ENCODE measurements at regions of chr3 and their contacts with region 1.

Region 1: GRCh38 chr3:20340324-20340928 is 154.4 kb upstream of the SGO1 start:
- DNase-seq: peak; percentile 62
- ATAC-seq: peak; percentile 93
- H3K4me3 ChIP-seq: no peak overlapping the region
- H3K27ac ChIP-seq: no peak overlapping the region
- H3K4me1 ChIP-seq: no peaks in the 10 kb centered on the region
- H3K27me3 ChIP-seq: no peaks in the 10 kb centered on the region
- CTCF ChIP-seq: peak; percentile 85
- EP300 ChIP-seq: no peak
- POLR2A ChIP-seq: no peak
- RAD21 ChIP-seq: peak; percentile 66; the same call in 1 of the 2 replicates

Region 2: GRCh38 chr3:20096135-20096685 is 244.2 kb before region 1 on chr3:
- CTCF ChIA-PET with region 1: no interaction called
- POLR2A ChIA-PET with region 1: no interaction called
- in situ Hi-C with region 1: no loop called
- intact Hi-C with region 1: no loop called
- DNase-seq: no peak
- ATAC-seq: no peak
- H3K4me3 ChIP-seq: no peak overlapping the region
- H3K27ac ChIP-seq: no peak overlapping the region
- H3K4me1 ChIP-seq: peaks cover 11% of the 10 kb centered on the region
- H3K27me3 ChIP-seq: no peaks in the 10 kb centered on the region
- CTCF ChIP-seq: no peak
- EP300 ChIP-seq: no peak
- POLR2A ChIP-seq: no peak
- RAD21 ChIP-seq: no peak

Region 3: GRCh38 chr3:20324714-20325478 is 15.5 kb before region 1 on chr3:
- CTCF ChIA-PET with region 1: no interaction called
- POLR2A ChIA-PET with region 1: no interaction called
- in situ Hi-C with region 1: no loop called
- intact Hi-C with region 1: no loop called
- DNase-seq: no peak
- ATAC-seq: no peak
- H3K4me3 ChIP-seq: no peak overlapping the region
- H3K27ac ChIP-seq: no peak overlapping the region
- H3K4me1 ChIP-seq: peaks cover 47% of the 10 kb centered on the region
- H3K27me3 ChIP-seq: no peaks in the 10 kb centered on the region
- CTCF ChIP-seq: no peak
- EP300 ChIP-seq: no peak
- POLR2A ChIP-seq: no peak
- RAD21 ChIP-seq: no peak

Region 4: GRCh38 chr3:21484057-21484827 is 1143.8 kb after region 1 on chr3:
- CTCF ChIA-PET with region 1: interaction called, 4 read pairs
- POLR2A ChIA-PET with region 1: no interaction called
- in situ Hi-C with region 1: no loop called
- intact Hi-C with region 1: loop called (anchors 1 kb)
- DNase-seq: peak; percentile 29
- ATAC-seq: peak; percentile 50
- H3K4me3 ChIP-seq: no peak overlapping the region
- H3K27ac ChIP-seq: no peak overlapping the region
- H3K4me1 ChIP-seq: no peaks in the 10 kb centered on the region
- H3K27me3 ChIP-seq: no peaks in the 10 kb centered on the region
- CTCF ChIP-seq: peak; percentile 60
- EP300 ChIP-seq: no peak
- POLR2A ChIP-seq: no peak
- RAD21 ChIP-seq: no peak